Activated CD4-positive, alpha-beta memory T cell treated with anti-CD3 and anti-CD28 coated beads, Interleukin-2, amount 10 ng/mL, durations not matched to agents 7 days and 5 days (primary cell): ENCODE measurements at regions of chr10 and their contacts with region 1.

Region 1: GRCh38 chr10:25080880-25081581 is 64.6 kb downstream of the THNSL1 start:
- DNase-seq: peak; percentile 60
- H3K4me3 Mint-ChIP-seq: no peak overlapping the region
- H3K27ac Mint-ChIP-seq: no peak overlapping the region
- H3K4me1 Mint-ChIP-seq: peaks cover 8% of the 10 kb centered on the region
- H3K27me3 Mint-ChIP-seq: peaks cover 15% of the 10 kb centered on the region

Region 2: DNA sequence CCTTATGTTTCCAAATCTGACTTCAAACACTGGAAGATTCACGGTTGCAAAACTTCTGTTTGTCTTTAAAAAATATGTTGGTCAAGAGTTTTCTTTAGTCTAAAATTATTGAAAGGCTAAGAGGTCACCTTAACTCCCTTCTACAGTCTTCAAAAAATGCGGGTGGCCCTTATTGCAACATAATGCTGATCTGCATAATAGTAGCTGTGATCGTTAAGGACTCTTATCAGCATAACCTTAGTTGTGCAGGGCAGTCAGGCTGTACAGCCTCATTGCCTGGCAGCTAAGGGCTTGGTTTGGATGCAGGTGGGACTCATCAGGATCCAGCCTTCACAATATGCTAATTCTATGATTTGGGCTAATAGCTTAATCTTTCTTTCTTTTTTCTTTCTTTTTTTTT is 857.1 kb before region 1 on chr10:
- CTCF ChIA-PET with region 1: no interaction called
- POLR2A ChIA-PET with region 1: no interaction called
- DNase-seq: no peak
- H3K4me3 Mint-ChIP-seq: no peak overlapping the region
- H3K27ac Mint-ChIP-seq: no peak overlapping the region
- H3K4me1 Mint-ChIP-seq: no peaks in the 10 kb centered on the region
- H3K27me3 Mint-ChIP-seq: no peaks in the 10 kb centered on the region

Region 3: GRCh38 chr10:24617771-24618391 is 463.1 kb before region 1 on chr10:
- CTCF ChIA-PET with region 1: interaction called, 20 read pairs
- POLR2A ChIA-PET with region 1: no interaction called
- DNase-seq: peak; percentile 43
- H3K4me3 Mint-ChIP-seq: no peak overlapping the region
- H3K27ac Mint-ChIP-seq: no peak overlapping the region
- H3K4me1 Mint-ChIP-seq: peaks cover 13% of the 10 kb centered on the region
- H3K27me3 Mint-ChIP-seq: no peaks in the 10 kb centered on the region

Region 4: GRCh38 chr10:24642622-24643417 is 438.2 kb before region 1 on chr10:
- CTCF ChIA-PET with region 1: interaction called, 10 read pairs
- POLR2A ChIA-PET with region 1: interaction called, 3 read pairs
- DNase-seq: no peak
- H3K4me3 Mint-ChIP-seq: no peak overlapping the region
- H3K27ac Mint-ChIP-seq: no peak overlapping the region
- H3K4me1 Mint-ChIP-seq: peaks cover 2% of the 10 kb centered on the region
- H3K27me3 Mint-ChIP-seq: no peaks in the 10 kb centered on the region

Region 5: DNA sequence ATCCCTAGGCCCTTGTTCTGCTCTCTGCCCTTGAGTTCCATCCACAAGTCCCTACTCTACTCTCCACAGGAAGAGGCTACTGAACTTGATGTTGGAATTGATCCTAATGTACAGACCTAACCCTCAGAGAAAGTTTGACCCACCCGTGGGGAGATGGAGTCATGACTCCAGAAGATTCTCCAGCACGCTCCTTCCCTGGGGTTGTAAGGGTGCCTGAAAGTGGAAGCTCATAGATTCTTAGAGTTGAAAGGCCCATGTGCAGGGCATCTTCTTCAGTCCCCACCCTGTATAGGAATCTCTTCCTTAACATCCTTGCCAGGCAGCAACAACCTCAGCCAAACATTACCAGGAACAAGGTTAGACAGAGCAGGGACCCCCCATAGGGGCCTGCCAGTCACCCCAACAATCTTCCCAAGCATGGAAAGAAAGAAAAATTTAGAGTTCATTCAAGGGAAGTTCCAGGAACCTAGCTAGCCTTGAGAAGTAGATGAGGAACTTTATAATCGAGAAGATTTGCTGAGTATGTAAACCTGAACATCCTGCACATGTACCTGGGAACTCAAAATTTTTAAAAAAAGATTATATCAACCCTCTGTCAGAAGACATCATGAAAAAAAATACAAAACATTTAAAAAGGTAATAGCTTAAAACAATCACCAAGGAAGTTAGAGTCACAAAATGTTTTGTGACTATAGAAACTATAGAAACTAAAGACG is 15.1 kb before region 1 on chr10:
- CTCF ChIA-PET with region 1: no interaction called
- POLR2A ChIA-PET with region 1: no interaction called
- DNase-seq: no peak
- H3K4me3 Mint-ChIP-seq: no peak overlapping the region
- H3K27ac Mint-ChIP-seq: no peak overlapping the region
- H3K4me1 Mint-ChIP-seq: peaks cover 37% of the 10 kb centered on the region
- H3K27me3 Mint-ChIP-seq: peaks cover 2% of the 10 kb centered on the region

Region 6: DNA sequence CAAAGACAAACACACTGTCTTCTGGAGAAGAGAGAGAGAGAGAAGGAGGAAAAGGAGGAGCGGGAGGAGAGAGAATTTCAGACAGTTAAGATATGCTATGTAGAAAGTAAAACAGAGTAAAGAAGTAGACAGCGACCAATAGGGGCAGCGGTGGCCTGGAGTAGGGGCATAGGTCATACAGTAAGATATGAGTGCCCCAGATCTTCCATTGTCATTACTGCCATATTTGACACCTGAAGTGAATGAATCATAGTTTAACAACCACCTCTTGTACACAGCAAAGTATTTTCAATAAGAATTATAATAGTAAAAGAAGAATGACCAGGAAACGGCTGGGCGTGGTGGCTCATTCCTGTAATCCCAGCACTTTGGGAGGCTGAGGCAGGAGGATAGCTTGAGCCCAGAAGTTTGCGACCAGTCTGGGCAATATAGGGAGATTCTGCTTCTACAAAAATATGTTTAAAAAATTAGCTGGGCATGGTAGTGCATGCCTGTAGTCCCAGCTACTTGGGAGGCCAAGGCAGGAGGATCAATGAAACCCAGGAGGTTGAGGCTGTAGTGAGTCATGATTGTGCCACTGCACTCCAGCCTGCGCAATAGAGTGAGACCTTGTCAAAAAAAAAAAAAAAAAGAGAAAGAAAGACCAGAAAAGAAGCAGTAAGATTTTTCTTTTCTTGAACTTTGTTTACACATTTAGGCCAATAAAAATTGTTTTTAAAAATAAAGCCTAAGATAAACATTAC is 16.8 kb after region 1 on chr10:
- CTCF ChIA-PET with region 1: no interaction called
- POLR2A ChIA-PET with region 1: no interaction called
- DNase-seq: no peak
- H3K4me3 Mint-ChIP-seq: no peak overlapping the region
- H3K27ac Mint-ChIP-seq: no peak overlapping the region
- H3K4me1 Mint-ChIP-seq: no peaks in the 10 kb centered on the region
- H3K27me3 Mint-ChIP-seq: peaks cover 2% of the 10 kb centered on the region

Region 7: GRCh38 chr10:25120188-25120587 is 39.2 kb after region 1 on chr10:
- CTCF ChIA-PET with region 1: no interaction called
- POLR2A ChIA-PET with region 1: no interaction called
- DNase-seq: no peak
- H3K4me3 Mint-ChIP-seq: no peak overlapping the region
- H3K27ac Mint-ChIP-seq: no peak overlapping the region
- H3K4me1 Mint-ChIP-seq: no peaks in the 10 kb centered on the region
- H3K27me3 Mint-ChIP-seq: peaks cover 4% of the 10 kb centered on the region